A549 (cell line): ENCODE measurements at regions of chr11 and their contacts with region 1.

Region 1: DNA sequence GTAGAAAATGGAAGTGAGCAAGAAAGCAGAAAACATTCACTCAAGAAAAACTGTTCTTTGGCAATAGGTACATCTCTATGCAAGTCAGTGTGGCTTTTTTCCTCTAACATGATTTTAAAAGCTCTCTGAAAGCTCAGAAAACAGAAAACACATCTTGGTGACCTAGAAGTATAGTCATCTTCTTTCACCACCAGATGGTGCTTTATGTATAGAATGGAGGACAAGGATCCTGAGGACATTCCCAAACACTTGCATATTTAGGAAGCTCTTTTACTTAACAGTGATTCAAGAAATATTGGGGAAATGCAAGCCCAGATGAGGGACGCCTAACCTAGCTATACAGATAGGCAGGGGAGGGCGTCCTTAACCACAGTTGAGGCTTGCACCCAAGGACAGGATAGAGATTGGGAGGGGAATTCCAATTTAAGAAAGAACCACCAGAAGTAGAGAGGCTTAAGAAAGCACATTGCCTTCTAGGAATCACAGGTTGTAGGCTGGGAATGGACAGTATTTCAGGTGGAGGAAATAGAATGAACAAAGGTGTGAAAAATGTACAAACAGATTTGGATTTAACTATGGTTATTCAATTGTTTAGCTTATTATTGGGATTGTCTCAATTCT is 13.8 kb upstream of the CCDC81 start:
- DNase-seq: peak; percentile 41 to 61
- ATAC-seq: peak; percentile 88 to 91
- H3K4me3 ChIP-seq: no peak overlapping the region
- H3K27ac ChIP-seq: no peak overlapping the region
- H3K4me1 ChIP-seq: no peaks in the 10 kb centered on the region
- CTCF ChIP-seq: peak; percentile 76
- EP300 ChIP-seq: no peak
- POLR2A ChIP-seq: no peak
- RAD21 ChIP-seq: peak; percentile 74 to 87

Region 2: DNA sequence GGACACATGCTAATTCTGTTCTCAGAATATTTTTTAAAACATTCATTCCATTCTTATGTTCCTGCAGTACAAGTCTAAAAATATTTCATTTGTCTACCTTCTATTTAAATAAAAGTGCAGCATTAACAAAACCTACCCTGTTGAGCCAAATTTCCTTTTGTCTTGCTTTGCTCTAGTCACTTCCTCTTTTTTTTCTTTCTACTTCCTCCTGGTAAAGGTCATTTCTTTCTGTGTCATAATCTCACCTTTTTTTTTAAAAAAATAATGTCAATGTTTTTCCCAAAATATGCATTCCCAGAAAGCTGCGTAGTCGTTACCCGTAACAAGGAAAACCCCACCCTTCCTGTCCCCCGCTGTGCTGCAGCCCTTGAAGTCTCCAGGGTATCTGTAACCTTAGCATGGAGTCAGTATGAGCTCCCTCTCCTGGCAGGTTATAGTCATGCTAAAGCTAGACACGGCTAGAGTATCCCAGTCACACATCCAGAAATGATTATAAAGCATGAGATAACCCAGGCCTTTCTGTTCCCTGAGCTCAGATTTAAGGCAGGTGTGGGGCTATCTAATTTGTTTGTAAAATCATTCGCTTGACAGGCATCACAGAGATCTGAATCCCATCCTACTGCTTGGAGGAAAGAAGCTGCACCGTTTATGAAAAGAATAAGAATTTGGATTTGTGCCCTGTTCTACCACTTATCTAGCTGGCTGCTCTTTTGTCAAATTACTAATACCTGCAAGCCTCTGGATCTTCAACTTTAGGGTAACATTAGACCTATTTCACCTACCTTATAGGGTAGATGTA is 167.4 kb before region 1 on chr11:
- CTCF ChIA-PET with region 1: no interaction called
- POLR2A ChIA-PET with region 1: no interaction called
- DNase-seq: peak; percentile 87 to 89
- ATAC-seq: peak; percentile 100
- H3K4me3 ChIP-seq: peak overlapping the region; percentile 29
- H3K27ac ChIP-seq: peak overlapping the region; percentile 50 to 81
- H3K4me1 ChIP-seq: peaks cover 15% of the 10 kb centered on the region; the same call in 2 of the 3 replicates
- CTCF ChIP-seq: peak; percentile 85
- EP300 ChIP-seq: no peak
- POLR2A ChIP-seq: no peak
- RAD21 ChIP-seq: peak; percentile 78 to 83

Region 3: GRCh38 chr11:86346513-86346912 is 14.4 kb before region 1 on chr11:
- CTCF ChIA-PET with region 1: interaction called, 19 read pairs
- POLR2A ChIA-PET with region 1: no interaction called
- DNase-seq: no peak
- ATAC-seq: no peak
- H3K4me3 ChIP-seq: no peak overlapping the region
- H3K27ac ChIP-seq: no peak overlapping the region
- H3K4me1 ChIP-seq: no peaks in the 10 kb centered on the region
- CTCF ChIP-seq: no peak
- EP300 ChIP-seq: no peak
- POLR2A ChIP-seq: no peak
- RAD21 ChIP-seq: no peak

Region 4: DNA sequence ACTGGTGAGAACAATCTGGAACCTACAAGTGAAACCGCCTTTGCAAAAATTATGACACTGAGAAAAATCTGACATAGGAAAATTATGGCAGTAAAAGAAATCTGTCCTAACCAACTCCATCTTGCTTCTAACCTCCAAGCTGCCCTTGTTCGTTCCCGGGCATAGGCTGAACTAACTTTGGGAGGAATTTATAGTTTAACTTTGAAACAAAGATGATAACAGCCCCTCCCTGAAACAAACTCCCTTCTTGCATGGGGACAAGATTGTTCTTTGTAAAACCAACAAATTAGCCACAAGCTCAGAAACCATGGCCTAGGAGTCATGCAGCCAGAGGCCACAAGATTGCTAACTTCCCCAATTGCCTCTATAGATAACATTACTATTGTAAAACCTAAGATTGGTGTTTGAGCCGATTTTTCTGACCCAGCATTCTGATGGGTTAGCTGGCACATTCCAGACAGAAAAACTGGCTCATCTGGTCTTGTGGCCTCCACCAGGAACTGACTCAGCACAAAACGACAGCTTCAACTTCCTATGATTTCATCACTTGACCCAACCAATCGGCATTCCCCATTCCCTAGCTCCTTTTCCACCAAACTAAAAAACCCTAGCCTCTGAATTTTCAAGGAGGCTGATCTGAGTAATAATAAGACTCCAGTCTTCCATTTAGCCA is 10.2 kb after region 1 on chr11:
- CTCF ChIA-PET with region 1: interaction called, 18 read pairs
- POLR2A ChIA-PET with region 1: no interaction called
- DNase-seq: peak in 1 of 2 experiments; percentile 22
- ATAC-seq: no peak
- H3K4me3 ChIP-seq: no peak overlapping the region
- H3K27ac ChIP-seq: no peak overlapping the region
- H3K4me1 ChIP-seq: no peaks in the 10 kb centered on the region
- CTCF ChIP-seq: no peak
- EP300 ChIP-seq: no peak
- POLR2A ChIP-seq: no peak
- RAD21 ChIP-seq: no peak

Region 5: GRCh38 chr11:86442420-86442819 is 81.5 kb after region 1 on chr11:
- CTCF ChIA-PET with region 1: interaction called, 11 read pairs
- POLR2A ChIA-PET with region 1: no interaction called
- DNase-seq: peak in 1 of 2 experiments; percentile 12
- ATAC-seq: peak in 1 of 2 experiments; percentile 33; a peak in 2 of 6 replicates
- H3K4me3 ChIP-seq: no peak overlapping the region
- H3K27ac ChIP-seq: peak overlapping the region in 1 of 2 experiments; percentile 29; a peak in 2 of 6 replicates
- H3K4me1 ChIP-seq: peaks cover 16% of the 10 kb centered on the region
- CTCF ChIP-seq: no peak
- EP300 ChIP-seq: no peak
- POLR2A ChIP-seq: no peak
- RAD21 ChIP-seq: no peak

Region 6: GRCh38 chr11:86447763-86448480 is 87.0 kb after region 1 on chr11:
- CTCF ChIA-PET with region 1: interaction called, 11 read pairs
- POLR2A ChIA-PET with region 1: no interaction called
- DNase-seq: no peak
- ATAC-seq: no peak
- H3K4me3 ChIP-seq: no peak overlapping the region
- H3K27ac ChIP-seq: no peak overlapping the region
- H3K4me1 ChIP-seq: peaks cover 2% of the 10 kb centered on the region; the same call in 2 of the 3 replicates
- CTCF ChIP-seq: no peak
- EP300 ChIP-seq: no peak
- POLR2A ChIP-seq: no peak
- RAD21 ChIP-seq: no peak

Region 7: GRCh38 chr11:86456052-86456939 is 95.4 kb after region 1 on chr11:
- CTCF ChIA-PET with region 1: interaction called, 11 read pairs
- POLR2A ChIA-PET with region 1: no interaction called
- DNase-seq: peak; percentile 79 to 84
- ATAC-seq: peak; percentile 82 to 93
- H3K4me3 ChIP-seq: no peak overlapping the region
- H3K27ac ChIP-seq: peak overlapping the region; percentile 68 to 85
- H3K4me1 ChIP-seq: peaks cover 43% of the 10 kb centered on the region
- CTCF ChIP-seq: peak; percentile 97
- EP300 ChIP-seq: no peak
- POLR2A ChIP-seq: no peak
- RAD21 ChIP-seq: peak; percentile 99

Region 8: DNA sequence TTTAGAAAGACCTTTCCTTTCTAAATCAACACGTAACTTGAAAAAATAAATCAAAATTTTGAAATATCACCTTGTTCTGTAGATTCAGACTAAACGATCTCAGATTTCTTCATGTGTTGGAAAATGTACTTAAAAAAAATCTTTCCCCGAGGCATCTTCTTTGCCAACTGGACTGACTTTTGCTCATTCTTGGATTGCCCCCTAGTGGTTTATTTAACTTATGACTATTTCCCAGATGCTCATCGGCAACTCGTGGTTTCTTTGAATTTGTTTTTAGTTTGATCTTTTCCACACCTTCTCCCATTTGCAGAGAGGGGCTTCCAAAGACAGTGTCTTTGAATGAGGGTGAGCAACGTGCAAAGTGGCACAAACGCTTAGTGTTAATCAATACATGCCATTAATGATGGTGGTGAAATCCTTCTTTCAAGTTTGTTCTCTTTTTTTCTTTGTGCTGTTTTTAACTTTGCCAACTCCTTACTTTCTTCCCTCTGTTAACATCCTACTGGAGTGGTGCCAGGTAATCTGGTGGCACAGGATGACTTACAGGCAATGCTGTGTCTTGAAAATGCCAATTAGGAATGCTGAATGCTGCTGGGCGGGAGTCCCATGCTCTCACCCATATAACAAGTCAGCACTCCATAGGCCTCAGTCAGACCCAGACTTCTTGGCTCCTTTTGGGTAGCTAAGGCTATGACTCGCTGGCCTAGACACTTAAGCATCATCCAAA is 457.7 kb after region 1 on chr11:
- CTCF ChIA-PET with region 1: interaction called, 19 read pairs
- POLR2A ChIA-PET with region 1: no interaction called
- DNase-seq: peak; percentile 60 to 82
- ATAC-seq: peak; percentile 40 to 51; a peak in 3 of 6 replicates
- H3K4me3 ChIP-seq: no peak overlapping the region
- H3K27ac ChIP-seq: peak overlapping the region; percentile 42 to 86
- H3K4me1 ChIP-seq: peaks cover 54% of the 10 kb centered on the region
- CTCF ChIP-seq: peak; percentile 91
- EP300 ChIP-seq: no peak
- POLR2A ChIP-seq: no peak
- RAD21 ChIP-seq: peak; percentile 96 to 98